Panc1 (cell line): ENCODE measurements at regions of chr5 and their contacts with region 1.

Region 1: DNA sequence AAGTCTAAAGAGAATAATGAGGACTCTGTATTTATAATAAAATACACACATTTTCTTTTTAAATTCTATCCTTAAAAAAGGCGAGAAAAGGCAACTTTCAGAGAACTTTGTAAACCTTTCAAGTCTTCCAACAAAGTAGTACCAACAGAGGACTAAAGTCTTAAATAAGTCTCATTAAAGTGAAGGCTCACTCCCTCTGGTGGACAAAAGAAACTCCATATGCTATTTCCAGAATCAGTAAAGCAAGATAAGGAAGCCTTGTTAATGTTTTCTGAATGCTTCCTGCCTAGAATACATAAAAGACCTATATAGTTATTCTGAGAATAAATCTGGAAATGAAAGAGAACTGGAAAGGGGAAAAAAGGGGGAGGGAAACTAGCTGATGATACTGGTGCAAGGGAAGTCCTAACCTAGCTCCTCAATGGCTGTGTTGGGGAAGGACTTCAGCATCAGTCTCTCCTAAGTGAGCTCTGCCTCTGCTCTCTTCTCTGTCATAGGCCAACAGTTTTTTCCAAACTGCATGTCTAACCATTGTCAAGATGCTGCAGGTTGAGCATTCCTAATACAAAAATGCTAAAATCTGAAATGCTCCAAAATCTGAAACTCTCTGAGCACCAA is 7.2 kb downstream of the HMGCS1 start:
- DNase-seq: peak; percentile 36
- ATAC-seq: peak; percentile 87; the same call in 1 of the 2 replicates
- H3K4me3 ChIP-seq: no peak overlapping the region
- H3K27ac ChIP-seq: no peak overlapping the region
- H3K4me1 ChIP-seq: no peaks in the 10 kb centered on the region
- H3K27me3 ChIP-seq: no peaks in the 10 kb centered on the region
- CTCF ChIP-seq: peak; percentile 80

Region 2: GRCh38 chr5:43389679-43390329 is 83.7 kb after region 1 on chr5:
- CTCF ChIA-PET with region 1: interaction called, 3 read pairs
- POLR2A ChIA-PET with region 1: no interaction called
- in situ Hi-C with region 1: no loop called
- intact Hi-C with region 1: loop called (anchors 5 kb)
- DNase-seq: peak; percentile 88
- ATAC-seq: peak; percentile 93
- H3K4me3 ChIP-seq: no peak overlapping the region
- H3K27ac ChIP-seq: no peak overlapping the region
- H3K4me1 ChIP-seq: no peaks in the 10 kb centered on the region
- H3K27me3 ChIP-seq: no peaks in the 10 kb centered on the region
- CTCF ChIP-seq: peak; percentile 87